ENCODE measurements at regions of chr17 and their contacts with region 1.

Region 1: DNA sequence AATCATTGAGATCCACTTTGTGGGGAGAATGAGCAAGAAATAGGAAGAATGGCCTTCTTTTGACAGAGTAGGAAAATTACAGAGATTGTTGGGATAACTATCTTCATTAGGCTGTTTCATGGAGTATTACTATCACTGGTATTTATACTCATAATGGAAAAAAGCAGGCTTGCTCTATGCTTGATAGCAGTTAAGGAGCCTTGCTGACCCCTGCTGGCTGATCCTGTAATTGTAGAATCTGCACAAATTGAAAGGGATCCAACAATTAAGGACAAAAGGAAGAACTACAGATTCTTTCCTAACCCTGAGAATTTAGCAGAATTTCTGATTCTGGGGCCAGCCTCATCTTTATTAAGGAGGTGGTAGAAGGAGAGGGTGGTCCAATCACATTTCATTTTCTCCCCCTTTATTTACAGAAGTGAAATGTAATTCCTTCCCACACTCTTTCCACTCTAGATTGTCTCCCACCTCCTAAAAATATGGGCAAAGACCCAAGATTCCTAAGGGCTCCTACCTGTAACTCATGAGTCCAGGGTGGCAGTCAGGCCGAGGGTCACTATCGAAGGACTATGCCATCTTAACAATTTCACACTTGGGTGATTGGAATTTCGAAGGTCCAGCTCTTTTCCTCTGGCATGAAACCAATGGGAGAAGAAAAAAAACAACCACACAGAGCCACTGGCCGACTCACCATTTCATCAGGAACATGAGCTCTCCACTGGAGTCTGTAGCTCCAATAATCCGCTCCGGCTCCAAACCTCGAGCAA is 26.3 kb downstream of the NFE2L1 start:
- DNase-seq: peak; percentile 89
- H3K4me3 Mint-ChIP-seq: no peak overlapping the region
- H3K27ac Mint-ChIP-seq: no peak overlapping the region
- H3K4me1 Mint-ChIP-seq: no peaks in the 10 kb centered on the region
- H3K27me3 Mint-ChIP-seq: no peaks in the 10 kb centered on the region

Region 2: DNA sequence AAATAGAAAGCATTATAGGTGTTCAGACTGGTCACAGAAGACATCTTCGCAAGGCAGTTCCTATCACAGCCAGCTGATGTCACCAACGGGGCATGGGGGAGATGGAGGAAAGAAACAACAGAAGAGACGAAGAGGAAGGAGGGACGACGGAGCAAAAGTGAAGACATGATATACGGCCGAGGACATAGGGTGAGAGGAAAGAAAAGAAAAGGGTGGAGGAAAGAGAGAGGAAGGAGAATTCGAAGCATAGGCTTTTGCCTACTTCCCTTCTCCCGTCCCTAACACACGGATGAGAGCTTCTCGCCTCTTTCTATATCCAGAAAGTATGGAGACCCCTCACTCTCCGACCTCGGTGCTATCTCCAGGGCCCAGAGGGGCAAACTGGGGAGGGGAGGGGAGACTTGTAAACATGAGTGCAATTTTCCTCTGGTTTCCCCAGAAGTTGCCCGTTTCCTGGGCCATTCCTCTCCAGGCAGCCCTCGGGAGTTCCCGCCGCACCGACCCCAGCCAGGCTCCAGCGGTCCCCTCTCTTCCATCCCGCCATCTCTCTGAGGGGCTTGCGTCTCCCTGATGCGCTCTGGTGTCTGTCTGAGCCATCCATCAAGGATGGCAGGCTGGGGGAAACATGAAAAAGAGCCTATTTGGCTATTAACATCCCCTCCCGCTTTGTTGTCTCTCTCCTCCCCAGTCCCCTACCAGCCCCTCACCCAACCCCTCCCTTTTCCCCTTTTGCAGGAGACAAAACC is 62.9 kb before region 1 on chr17:
- CTCF ChIA-PET with region 1: interaction called, 10 read pairs
- intact Hi-C with region 1: loop called (anchors 1 kb)
- DNase-seq: peak; percentile 72
- H3K4me3 Mint-ChIP-seq: peak overlapping the region; percentile 70
- H3K27ac Mint-ChIP-seq: no peak overlapping the region
- H3K4me1 Mint-ChIP-seq: peaks cover 12% of the 10 kb centered on the region
- H3K27me3 Mint-ChIP-seq: peaks cover 50% of the 10 kb centered on the region

Region 3: GRCh38 chr17:48030531-48030930 is 44.0 kb before region 1 on chr17:
- CTCF ChIA-PET with region 1: interaction called, 67 read pairs
- intact Hi-C with region 1: loop called (anchors 1 kb)
- DNase-seq: no peak
- H3K4me3 Mint-ChIP-seq: no peak overlapping the region
- H3K27ac Mint-ChIP-seq: no peak overlapping the region
- H3K4me1 Mint-ChIP-seq: peaks cover 9% of the 10 kb centered on the region
- H3K27me3 Mint-ChIP-seq: peaks cover 15% of the 10 kb centered on the region

Region 4: DNA sequence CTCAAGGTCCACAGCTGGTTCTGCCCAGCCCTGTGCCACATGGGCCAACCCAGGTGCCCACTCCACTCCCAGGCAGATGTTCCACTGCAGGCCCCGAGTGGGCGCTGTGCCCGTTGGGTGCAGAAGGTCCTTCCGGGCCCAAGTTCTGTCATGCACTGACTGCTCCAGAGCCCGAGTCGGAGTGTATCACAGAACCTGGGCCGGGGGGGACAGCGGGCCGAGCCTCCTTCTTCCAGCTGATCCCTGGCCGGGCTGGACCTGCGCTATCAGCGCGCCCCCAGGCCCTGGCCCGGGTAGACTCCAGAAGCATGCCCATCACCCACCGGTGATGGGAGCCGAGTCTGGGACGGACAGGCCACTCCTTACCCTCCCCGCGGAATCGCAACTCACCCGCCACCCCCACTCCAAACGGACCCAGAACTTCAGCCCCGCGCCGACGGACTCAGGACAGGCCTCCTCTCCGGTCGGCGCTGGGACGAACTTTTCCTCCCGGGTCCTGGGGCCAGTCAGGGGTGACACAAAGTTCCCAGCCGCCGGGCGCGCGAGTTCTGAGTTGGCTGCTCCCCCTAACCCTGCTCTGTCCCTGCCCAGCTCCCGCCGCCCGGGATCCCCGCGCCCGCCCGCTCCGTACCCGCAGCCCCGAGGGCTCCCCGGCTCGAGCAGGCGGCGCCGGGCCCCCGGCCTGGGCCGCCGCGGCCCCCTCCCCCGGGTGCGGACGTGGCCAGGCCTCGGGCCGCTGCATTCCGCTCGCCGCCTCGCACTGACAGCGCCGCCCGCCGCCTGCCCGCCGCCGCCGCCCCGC is 37.3 kb before region 1 on chr17 and contains the start of gene COPZ2:
- CTCF ChIA-PET with region 1: interaction called, 16 read pairs
- intact Hi-C with region 1: loop called (anchors 1 kb)
- DNase-seq: peak; percentile 75
- H3K4me3 Mint-ChIP-seq: peak within 1 kb of the TSS; percentile 75
- H3K27ac Mint-ChIP-seq: no peak within 1 kb of the TSS
- H3K4me1 Mint-ChIP-seq: peaks cover 7% of the 10 kb centered on the region
- H3K27me3 Mint-ChIP-seq: peaks cover 32% of the 10 kb centered on the region
- total RNA-seq, gene COPZ2: 2.4 to 3.3 TPM

Region 5: DNA sequence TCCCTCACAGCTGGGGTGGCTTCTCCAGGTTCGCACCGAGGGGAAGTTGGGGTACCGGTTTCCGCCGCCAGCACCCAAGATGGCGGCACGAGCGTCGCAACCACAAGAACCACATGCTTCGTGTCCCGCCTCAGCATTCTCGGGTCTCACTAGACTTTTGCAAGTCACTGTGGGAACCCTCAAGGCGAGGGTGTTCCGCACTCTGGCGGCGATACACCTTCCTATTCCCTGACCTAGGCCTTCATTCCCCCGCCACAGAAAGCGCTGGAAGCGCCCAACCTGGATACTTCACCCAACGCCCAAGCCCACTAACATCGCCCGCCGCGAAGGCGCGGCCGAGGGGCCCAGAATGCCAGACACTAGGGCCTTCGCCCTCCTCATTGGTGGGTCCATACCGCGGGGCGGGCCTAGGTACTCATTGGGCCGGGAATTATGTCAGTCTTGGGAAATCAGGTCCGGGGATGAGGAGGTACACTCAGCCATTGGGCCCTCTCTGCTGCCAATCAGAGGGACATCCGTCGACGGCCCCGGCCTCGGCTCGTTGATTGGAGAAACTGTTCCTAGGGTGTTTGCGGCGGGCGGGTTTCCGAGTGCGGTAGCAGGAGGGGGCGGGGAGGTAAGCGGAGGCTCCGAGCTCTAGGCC is 26.6 kb before region 1 on chr17 and contains the start of gene NFE2L1:
- CTCF ChIA-PET with region 1: interaction called, 12 read pairs
- intact Hi-C with region 1: no loop called
- DNase-seq: peak; percentile 100
- H3K4me3 Mint-ChIP-seq: peak within 1 kb of the TSS; percentile 99
- H3K27ac Mint-ChIP-seq: peak within 1 kb of the TSS; percentile 98
- H3K4me1 Mint-ChIP-seq: peaks cover 51% of the 10 kb centered on the region
- H3K27me3 Mint-ChIP-seq: no peaks in the 10 kb centered on the region
- total RNA-seq, gene NFE2L1: 95.2 to 102 TPM

Region 6: DNA sequence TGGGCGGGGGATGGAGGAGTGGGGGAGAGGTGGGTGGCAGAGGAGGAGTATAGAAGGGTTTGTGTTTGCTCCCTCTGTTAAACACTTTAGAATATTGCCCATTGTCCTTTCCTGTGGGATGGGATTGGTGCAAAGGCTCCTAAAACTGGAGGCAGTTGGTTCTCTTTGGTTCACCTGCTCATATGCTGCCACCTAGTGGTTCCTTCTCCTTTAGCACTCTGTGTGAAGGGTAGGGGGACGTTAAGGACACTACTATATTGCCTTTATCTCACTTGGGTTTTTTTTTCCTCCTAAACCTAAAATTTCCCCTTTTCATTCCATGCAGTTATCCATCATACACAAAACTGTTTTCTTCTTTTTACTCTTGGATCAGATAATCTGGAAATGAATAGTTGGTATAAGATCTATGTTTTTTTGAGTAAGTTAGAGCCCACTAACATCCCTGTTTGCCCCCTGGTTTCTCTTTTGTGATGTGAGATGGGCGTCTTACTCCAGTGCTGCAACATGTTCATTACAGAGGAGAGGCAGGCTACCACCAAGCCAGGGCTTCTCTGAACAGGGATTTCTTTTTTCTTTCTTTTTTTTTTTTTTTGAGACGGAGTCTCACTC is 56.8 kb after region 1 on chr17:
- CTCF ChIA-PET with region 1: interaction called, 60 read pairs
- intact Hi-C with region 1: no loop called
- DNase-seq: peak; percentile 75
- H3K4me3 Mint-ChIP-seq: no peak overlapping the region
- H3K27ac Mint-ChIP-seq: no peak overlapping the region
- H3K4me1 Mint-ChIP-seq: no peaks in the 10 kb centered on the region
- H3K27me3 Mint-ChIP-seq: no peaks in the 10 kb centered on the region

Region 7: GRCh38 chr17:48181653-48182052 is 107.2 kb after region 1 on chr17:
- CTCF ChIA-PET with region 1: no interaction called
- intact Hi-C with region 1: no loop called
- DNase-seq: no peak
- H3K4me3 Mint-ChIP-seq: no peak overlapping the region
- H3K27ac Mint-ChIP-seq: no peak overlapping the region
- H3K4me1 Mint-ChIP-seq: peaks cover 13% of the 10 kb centered on the region
- H3K27me3 Mint-ChIP-seq: no peaks in the 10 kb centered on the region

Measured in activated naive CD4-positive, alpha-beta T cell treated with anti-CD3 and anti-CD28 coated beads for 36 hours (primary cell).